Mammary epithelial cell (primary cell): ENCODE measurements at regions of chr20 and their contacts with region 1.

Region 1: GRCh38 chr20:63140514-63141433 is 75.2 kb downstream of the YTHDF1 start:
- DNase-seq: no peak
- H3K4me3 ChIP-seq: no peak overlapping the region
- H3K27ac ChIP-seq: no peak overlapping the region
- H3K4me1 ChIP-seq: no peaks in the 10 kb centered on the region
- H3K27me3 ChIP-seq: no peaks in the 10 kb centered on the region
- CTCF ChIP-seq: no peak

Region 2: DNA sequence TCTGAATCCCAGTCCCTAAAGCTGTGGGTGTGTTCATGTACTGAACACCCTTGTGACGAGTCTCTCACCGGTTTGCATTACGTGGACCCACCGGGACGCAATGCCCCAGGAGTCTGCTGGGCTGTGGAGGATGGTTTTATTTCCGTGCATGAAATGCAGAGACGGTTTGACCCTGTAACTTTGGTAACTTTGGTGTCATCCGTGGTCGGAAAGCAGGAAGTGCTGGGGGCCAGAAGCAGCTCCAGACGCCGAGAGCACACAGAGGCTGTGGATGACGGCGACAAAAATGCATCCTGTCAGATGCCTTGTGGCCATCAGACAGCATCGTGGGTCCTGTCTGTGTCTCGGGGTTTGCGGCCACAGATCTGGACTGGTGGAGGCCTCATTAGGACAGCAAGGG is 141.2 kb before region 1 on chr20:
- CTCF ChIA-PET with region 1: no interaction called
- dilution Hi-C with region 1: loop called (anchors 5 kb)
- in situ Hi-C with region 1: no loop called
- intact Hi-C with region 1: no loop called
- DNase-seq: no peak
- H3K4me3 ChIP-seq: no peak overlapping the region
- H3K27ac ChIP-seq: no peak overlapping the region
- H3K4me1 ChIP-seq: no peaks in the 10 kb centered on the region
- H3K27me3 ChIP-seq: peaks cover 14% of the 10 kb centered on the region
- CTCF ChIP-seq: no peak

Region 3: DNA sequence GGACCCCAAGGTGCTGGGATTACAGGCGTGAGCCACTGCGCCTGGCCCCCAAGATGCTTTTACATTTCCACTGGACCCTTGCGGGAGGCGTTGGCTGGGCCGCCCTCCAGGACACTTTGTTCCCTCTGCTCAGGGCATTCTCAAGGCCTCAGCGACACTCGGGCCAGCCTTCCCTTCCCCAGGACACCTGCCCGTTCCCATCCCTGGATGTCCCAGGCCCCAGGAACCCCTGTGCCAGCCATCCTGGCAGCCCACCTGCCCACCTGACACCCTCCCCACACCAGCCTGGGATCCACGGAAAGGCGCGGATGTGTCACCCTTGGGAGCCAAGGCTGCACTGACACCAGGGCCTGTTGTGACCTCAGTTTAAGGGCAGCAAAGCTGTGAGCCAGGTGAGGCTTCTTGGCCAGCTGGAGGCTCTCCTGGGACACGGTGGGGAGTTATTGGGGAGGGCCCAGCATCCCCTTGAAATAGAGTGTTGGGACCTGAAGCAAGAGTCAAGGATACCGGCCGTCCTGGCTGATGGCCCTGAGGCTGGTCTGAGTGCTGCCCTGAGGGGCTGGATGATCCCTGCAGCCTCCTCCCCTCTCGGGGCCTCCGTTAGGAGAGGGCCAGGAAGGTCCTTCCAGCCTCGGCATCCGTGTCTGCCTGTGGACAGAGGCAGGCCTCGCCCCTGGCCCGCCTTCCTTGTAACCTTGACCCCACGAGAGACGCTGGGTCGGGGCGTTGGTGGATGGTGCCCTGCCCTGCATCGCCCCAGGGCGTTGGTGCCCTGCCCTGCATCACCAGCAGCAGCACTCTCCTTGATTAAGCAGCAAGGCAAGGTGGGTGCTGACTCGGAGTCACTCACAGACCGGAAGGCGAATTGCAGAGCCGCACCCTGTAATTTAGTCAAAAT is 49.8 kb before region 1 on chr20:
- CTCF ChIA-PET with region 1: no interaction called
- dilution Hi-C with region 1: loop called (anchors 5 kb)
- in situ Hi-C with region 1: no loop called
- intact Hi-C with region 1: no loop called
- DNase-seq: no peak
- H3K4me3 ChIP-seq: no peak overlapping the region
- H3K27ac ChIP-seq: no peak overlapping the region
- H3K4me1 ChIP-seq: no peaks in the 10 kb centered on the region
- H3K27me3 ChIP-seq: peaks cover 2% of the 10 kb centered on the region
- CTCF ChIP-seq: no peak

Region 4: DNA sequence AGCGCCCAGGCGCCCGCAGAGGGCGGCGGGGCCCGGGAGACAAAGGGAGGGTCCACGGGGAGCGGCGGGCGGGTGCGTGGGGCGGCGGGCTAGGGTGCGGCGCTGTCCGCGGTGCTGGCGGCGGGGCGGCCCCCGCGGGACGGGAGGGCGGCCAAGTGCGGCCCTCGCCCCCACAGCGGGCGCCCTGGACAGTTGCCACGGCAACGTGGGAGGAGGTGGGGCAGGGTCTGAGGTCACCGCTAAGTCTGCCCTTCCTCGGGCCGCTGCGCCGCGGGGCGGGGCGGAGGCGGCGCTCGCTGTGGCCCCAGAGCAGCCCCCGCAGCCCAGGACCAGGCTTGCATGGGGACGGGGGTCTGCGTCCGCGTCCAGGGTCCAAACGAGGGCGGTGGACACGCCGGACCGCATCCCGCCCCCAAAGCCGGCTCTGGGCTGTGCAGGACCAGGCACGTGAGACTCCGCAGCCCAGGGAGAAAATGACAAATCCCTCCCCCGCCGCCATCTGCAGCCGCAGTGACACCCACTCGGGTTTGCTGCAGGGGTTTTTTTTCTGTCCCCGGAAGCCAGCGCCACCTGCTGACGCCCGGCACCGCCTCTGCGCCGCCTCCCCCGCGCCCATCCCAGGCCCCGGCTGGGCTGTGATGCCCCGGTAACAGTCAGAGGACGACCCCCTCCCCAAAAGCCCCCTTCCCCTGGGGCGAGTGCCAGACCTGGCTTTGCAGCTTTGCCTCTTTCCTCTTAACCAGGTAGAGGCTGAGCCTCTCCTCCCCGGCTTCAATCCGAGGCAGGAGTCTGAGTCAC is 38.3 kb after region 1 on chr20:
- CTCF ChIA-PET with region 1: no interaction called
- dilution Hi-C with region 1: no loop called
- in situ Hi-C with region 1: no loop called
- intact Hi-C with region 1: no loop called
- DNase-seq: no peak
- H3K4me3 ChIP-seq: no peak overlapping the region
- H3K27ac ChIP-seq: no peak overlapping the region
- H3K4me1 ChIP-seq: peaks cover 7% of the 10 kb centered on the region
- H3K27me3 ChIP-seq: peaks cover 46% of the 10 kb centered on the region
- CTCF ChIP-seq: peak in 1 of 2 donors; percentile 63

Region 5: GRCh38 chr20:63196768-63197470 is 56.1 kb after region 1 on chr20:
- CTCF ChIA-PET with region 1: no interaction called
- dilution Hi-C with region 1: loop called (anchors 5 kb)
- in situ Hi-C with region 1: no loop called
- intact Hi-C with region 1: no loop called
- DNase-seq: no peak
- H3K4me3 ChIP-seq: no peak overlapping the region
- H3K27ac ChIP-seq: no peak overlapping the region
- H3K4me1 ChIP-seq: peaks cover 9% of the 10 kb centered on the region
- H3K27me3 ChIP-seq: no peaks in the 10 kb centered on the region
- CTCF ChIP-seq: no peak

Region 6: DNA sequence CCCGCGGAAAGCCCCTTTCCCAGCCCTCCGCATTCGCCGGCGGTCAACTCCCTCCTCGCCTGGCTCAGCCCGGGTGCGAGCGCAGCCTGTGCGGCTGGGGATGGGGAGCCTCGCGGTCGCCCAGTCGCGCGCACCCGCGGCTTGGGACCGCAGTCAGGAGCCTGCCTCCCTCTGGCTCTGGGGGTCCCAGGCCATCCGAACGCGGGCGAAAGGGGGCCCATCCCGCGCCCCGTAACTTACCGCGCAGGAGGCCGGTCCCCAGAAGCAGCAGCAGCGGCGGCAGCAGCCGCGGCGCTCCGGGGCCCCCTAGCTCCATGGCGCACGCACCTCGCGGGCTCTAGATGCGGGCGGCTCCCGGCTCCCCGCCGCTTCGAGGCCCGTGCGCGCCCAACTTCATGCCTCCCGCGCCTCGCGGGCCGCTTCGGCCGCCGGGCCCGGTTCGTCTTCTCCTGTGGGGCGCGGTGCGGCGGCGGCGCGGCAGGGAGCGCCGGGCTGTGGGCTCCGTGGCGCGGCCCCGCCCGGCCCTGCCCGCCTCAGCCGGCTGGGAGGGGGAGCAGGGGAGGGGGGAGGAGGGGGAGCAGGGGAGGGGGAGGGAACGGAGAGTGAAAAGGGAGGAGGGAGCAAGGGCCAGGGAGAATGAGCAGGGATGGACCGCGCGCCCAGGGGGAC is 220.2 kb after region 1 on chr20 and contains the start of gene CHRNA4:
- CTCF ChIA-PET with region 1: no interaction called
- dilution Hi-C with region 1: no loop called
- in situ Hi-C with region 1: no loop called
- intact Hi-C with region 1: no loop called
- DNase-seq: no peak
- H3K4me3 ChIP-seq: no peak within 1 kb of the TSS
- H3K27ac ChIP-seq: no peak within 1 kb of the TSS
- H3K4me1 ChIP-seq: no peaks in the 10 kb centered on the region
- H3K27me3 ChIP-seq: peaks cover 23% of the 10 kb centered on the region
- CTCF ChIP-seq: no peak
- total RNA-seq, gene CHRNA4: not detected

Region 7: DNA sequence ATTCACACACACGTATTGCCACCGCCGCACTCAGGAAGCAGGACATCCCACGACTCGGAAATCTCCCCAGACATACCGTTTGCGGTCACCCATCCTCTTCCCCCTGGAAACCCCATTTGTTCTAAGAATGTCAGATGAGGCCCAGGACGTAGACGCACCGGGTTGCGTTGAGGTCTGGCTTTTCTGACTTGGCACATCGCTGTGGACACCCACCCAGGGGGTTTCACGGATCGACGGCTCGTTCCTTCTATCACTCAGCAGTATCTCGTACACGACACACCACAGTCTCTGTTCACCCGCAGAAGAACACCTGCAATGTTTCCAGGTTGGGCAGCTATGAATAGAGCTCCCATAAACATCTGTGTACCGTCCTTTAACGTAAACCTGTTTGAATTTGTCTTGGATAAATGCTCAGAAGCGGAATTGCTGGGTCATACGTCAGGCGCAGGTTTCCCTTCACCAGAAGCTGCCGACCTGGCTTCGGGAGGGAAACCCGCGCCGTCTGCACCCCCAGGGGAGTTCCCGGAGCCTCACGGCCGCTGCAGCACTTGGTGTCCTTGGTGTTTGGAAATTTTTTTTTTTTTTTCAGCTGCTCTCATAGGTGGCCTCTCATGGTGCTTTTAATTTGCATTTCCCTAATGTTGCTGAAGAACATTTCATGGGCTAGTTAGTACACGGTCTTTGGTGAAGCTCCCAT is 367.4 kb after region 1 on chr20:
- CTCF ChIA-PET with region 1: interaction called, 18 read pairs
- dilution Hi-C with region 1: no loop called
- in situ Hi-C with region 1: no loop called
- intact Hi-C with region 1: no loop called
- DNase-seq: no peak
- H3K4me3 ChIP-seq: no peak overlapping the region
- H3K27ac ChIP-seq: no peak overlapping the region
- H3K4me1 ChIP-seq: no peaks in the 10 kb centered on the region
- H3K27me3 ChIP-seq: peaks cover 2% of the 10 kb centered on the region
- CTCF ChIP-seq: no peak